PC-3 (cell line): ENCODE measurements at regions of chr6 and their contacts with region 1.

Region 1: DNA sequence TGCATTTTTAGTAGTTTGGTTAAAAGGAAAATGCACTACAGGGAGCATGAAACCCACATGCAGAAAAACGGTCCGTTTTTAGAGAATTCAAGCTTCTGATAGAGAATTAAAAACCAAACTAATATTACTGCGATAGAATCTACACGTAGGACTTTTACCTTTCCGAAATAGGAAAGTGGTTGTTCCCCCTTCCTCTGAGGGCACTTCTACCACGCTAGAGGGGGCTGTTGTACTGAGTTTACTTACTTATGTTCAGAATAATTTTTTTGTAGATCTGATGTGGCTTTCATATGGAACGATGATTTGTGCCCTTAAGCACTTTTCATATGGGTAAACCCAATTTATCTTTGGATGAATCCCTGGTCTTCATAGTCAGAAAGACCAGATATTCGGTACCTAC is 264.3 kb upstream of the PLN start:
- DNase-seq: peak; percentile 71
- ATAC-seq: peak; percentile 77
- H3K4me3 ChIP-seq: no peak overlapping the region
- H3K27ac ChIP-seq: no peak overlapping the region
- H3K4me1 ChIP-seq: no peaks in the 10 kb centered on the region
- H3K27me3 ChIP-seq: no peaks in the 10 kb centered on the region
- CTCF ChIP-seq: peak; percentile 84

Region 2: GRCh38 chr6:118111708-118112107 is 172.1 kb before region 1 on chr6:
- CTCF ChIA-PET with region 1: no interaction called
- POLR2A ChIA-PET with region 1: no interaction called
- intact Hi-C with region 1: no loop called
- DNase-seq: no peak
- ATAC-seq: no peak
- H3K4me3 ChIP-seq: no peak overlapping the region
- H3K27ac ChIP-seq: no peak overlapping the region
- H3K4me1 ChIP-seq: no peaks in the 10 kb centered on the region
- H3K27me3 ChIP-seq: no peaks in the 10 kb centered on the region
- CTCF ChIP-seq: no peak

Region 3: GRCh38 chr6:118187568-118188164 is 96.1 kb before region 1 on chr6:
- CTCF ChIA-PET with region 1: no interaction called
- POLR2A ChIA-PET with region 1: no interaction called
- intact Hi-C with region 1: no loop called
- DNase-seq: no peak
- ATAC-seq: no peak
- H3K4me3 ChIP-seq: no peak overlapping the region
- H3K27ac ChIP-seq: no peak overlapping the region
- H3K4me1 ChIP-seq: no peaks in the 10 kb centered on the region
- H3K27me3 ChIP-seq: no peaks in the 10 kb centered on the region
- CTCF ChIP-seq: no peak

Region 4: GRCh38 chr6:118252474-118252873 is 31.3 kb before region 1 on chr6:
- CTCF ChIA-PET with region 1: no interaction called
- POLR2A ChIA-PET with region 1: no interaction called
- intact Hi-C with region 1: no loop called
- DNase-seq: no peak
- ATAC-seq: no peak
- H3K4me3 ChIP-seq: no peak overlapping the region
- H3K27ac ChIP-seq: no peak overlapping the region
- H3K4me1 ChIP-seq: no peaks in the 10 kb centered on the region
- H3K27me3 ChIP-seq: peaks cover 23% of the 10 kb centered on the region; the same call in 1 of the 2 replicates
- CTCF ChIP-seq: 0 out of 2 replicates have a peak, but pooled peaks have one; percentile 17

Region 5: DNA sequence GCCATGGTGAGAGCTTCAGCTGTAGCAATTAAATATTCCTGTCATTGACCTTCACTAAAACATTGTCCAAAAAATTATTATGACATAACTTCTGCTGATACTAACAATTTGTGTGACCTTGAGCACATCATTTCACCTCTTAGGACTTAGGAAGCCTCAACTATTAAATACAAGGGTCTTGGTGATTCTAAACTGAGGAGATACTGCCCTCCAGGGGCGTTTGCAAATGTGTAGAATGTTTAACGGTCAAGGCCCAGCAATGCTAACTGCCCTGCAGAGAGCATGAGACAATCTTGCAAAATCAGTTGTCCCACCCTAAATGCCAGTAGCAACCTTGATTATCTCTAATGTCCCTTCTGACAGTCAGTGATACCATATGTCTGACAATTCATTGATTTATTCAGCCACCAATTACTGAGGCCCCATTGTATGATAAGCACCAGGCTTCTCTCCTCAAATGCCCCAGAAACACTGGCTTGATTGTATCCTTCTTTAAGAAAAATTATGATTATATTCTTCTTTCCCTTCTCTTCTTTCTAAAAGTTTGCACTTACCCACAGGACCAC is 19.8 kb before region 1 on chr6:
- CTCF ChIA-PET with region 1: no interaction called
- POLR2A ChIA-PET with region 1: no interaction called
- intact Hi-C with region 1: no loop called
- DNase-seq: peak; percentile 27
- ATAC-seq: peak; percentile 46; the same call in 1 of the 2 replicates
- H3K4me3 ChIP-seq: no peak overlapping the region
- H3K27ac ChIP-seq: no peak overlapping the region
- H3K4me1 ChIP-seq: no peaks in the 10 kb centered on the region
- H3K27me3 ChIP-seq: 0 out of 2 replicates have a peak, but pooled peaks cover 9% of the 10 kb centered on the region
- CTCF ChIP-seq: peak; percentile 51; the same call in 1 of the 2 replicates

Region 6: DNA sequence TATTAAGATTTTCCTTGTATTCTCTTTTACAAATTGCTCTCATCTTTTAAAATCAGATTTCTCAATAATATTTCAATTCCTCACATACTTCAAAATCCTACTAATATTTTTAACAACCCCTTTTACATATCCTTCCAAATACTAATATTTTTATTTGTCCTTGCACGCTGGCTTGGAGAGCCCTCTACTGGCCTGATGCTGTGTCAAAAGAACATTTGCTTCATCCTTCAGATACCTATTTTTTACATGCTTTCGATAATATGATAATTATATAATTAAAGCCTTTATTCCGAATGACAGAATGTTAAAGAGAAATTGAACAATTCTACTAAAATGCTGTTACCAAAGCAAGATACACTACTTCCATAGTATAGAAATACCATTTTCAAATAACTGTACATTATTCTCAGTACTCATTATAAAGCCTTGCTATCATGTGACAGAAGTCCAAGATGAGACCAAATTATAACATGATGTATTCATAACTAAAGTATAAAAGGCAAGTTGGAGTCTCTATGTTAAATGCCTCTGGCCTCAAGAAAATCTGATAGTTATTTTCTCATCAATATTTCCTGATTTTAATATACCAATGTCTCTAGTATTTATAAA is 225.3 kb after region 1 on chr6:
- CTCF ChIA-PET with region 1: no interaction called
- POLR2A ChIA-PET with region 1: no interaction called
- intact Hi-C with region 1: loop called (anchors 1 kb)
- DNase-seq: peak; percentile 54
- ATAC-seq: no peak
- H3K4me3 ChIP-seq: no peak overlapping the region
- H3K27ac ChIP-seq: no peak overlapping the region
- H3K4me1 ChIP-seq: no peaks in the 10 kb centered on the region
- H3K27me3 ChIP-seq: no peaks in the 10 kb centered on the region
- CTCF ChIP-seq: peak; percentile 82

Region 7: GRCh38 chr6:118800394-118801071 is 516.8 kb after region 1 on chr6:
- CTCF ChIA-PET with region 1: no interaction called
- POLR2A ChIA-PET with region 1: no interaction called
- intact Hi-C with region 1: loop called (anchors 5 kb)
- DNase-seq: peak; percentile 90
- ATAC-seq: peak; percentile 92
- H3K4me3 ChIP-seq: peak overlapping the region; percentile 25; the same call in 1 of the 2 replicates
- H3K27ac ChIP-seq: no peak overlapping the region
- H3K4me1 ChIP-seq: no peaks in the 10 kb centered on the region; the same call in 1 of the 2 replicates
- H3K27me3 ChIP-seq: no peaks in the 10 kb centered on the region
- CTCF ChIP-seq: peak; percentile 88